Mammary epithelial cell (primary cell): ENCODE measurements at regions of chr15 and their contacts with region 1.

Region 1: GRCh38 chr15:49620658-49621368 is at the starts of genes DTWD1 and FAM227B:
- DNase-seq: peak; percentile 97
- H3K4me3 ChIP-seq: peak within 1 kb of the TSS; percentile 88 to 96 (median 92)
- H3K27ac ChIP-seq: peak within 1 kb of the TSS; percentile 87
- H3K4me1 ChIP-seq: peaks cover 27% of the 10 kb centered on the region
- H3K27me3 ChIP-seq: no peaks in the 10 kb centered on the region
- CTCF ChIP-seq: no peak
- total RNA-seq, gene DTWD1: 23.2 to 24.2 TPM
- total RNA-seq, gene FAM227B: 5.0 to 5.4 TPM

Region 2: GRCh38 chr15:49155110-49155833 is 465.5 kb before region 1 on chr15 and contains the start of gene COPS2:
- CTCF ChIA-PET with region 1: no interaction called
- dilution Hi-C with region 1: no loop called
- in situ Hi-C with region 1: no loop called
- intact Hi-C with region 1: loop called (anchors 10 kb)
- DNase-seq: peak; percentile 98
- H3K4me3 ChIP-seq: peak within 1 kb of the TSS; percentile 83 to 98 (median 97)
- H3K27ac ChIP-seq: peak within 1 kb of the TSS; percentile 86
- H3K4me1 ChIP-seq: peaks cover 13% of the 10 kb centered on the region
- H3K27me3 ChIP-seq: no peaks in the 10 kb centered on the region
- CTCF ChIP-seq: no peak
- total RNA-seq, gene COPS2: 44.7 to 88.3 TPM

Region 3: GRCh38 chr15:49492824-49493223 is 128.0 kb before region 1 on chr15:
- CTCF ChIA-PET with region 1: no interaction called
- dilution Hi-C with region 1: no loop called
- in situ Hi-C with region 1: no loop called
- intact Hi-C with region 1: loop called (anchors 2 kb)
- DNase-seq: peak; percentile 90
- H3K4me3 ChIP-seq: no peak overlapping the region
- H3K27ac ChIP-seq: no peak overlapping the region
- H3K4me1 ChIP-seq: no peaks in the 10 kb centered on the region
- H3K27me3 ChIP-seq: no peaks in the 10 kb centered on the region
- CTCF ChIP-seq: no peak

Region 4: DNA sequence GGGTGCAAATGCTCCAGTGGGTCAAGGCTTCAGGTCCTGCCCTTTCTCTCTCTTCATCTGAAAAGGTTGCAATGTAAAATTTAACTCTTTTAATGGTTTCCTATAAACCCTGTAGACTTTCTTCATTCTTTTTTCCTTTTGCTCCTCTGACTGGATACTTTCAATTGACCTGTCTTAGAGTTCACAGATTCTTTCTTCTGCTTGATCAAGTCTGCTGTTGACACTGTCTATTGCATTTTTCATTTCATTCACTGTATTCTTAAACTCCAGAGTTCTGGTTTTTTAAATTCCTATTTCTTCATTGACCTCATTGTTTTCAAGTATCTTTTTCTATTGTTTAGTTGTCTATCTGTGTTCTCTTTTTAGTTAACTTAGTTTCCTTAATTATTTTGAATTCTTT is 82.3 kb before region 1 on chr15:
- CTCF ChIA-PET with region 1: no interaction called
- dilution Hi-C with region 1: no loop called
- in situ Hi-C with region 1: no loop called
- intact Hi-C with region 1: no loop called
- DNase-seq: no peak
- H3K4me3 ChIP-seq: no peak overlapping the region
- H3K27ac ChIP-seq: no peak overlapping the region
- H3K4me1 ChIP-seq: no peaks in the 10 kb centered on the region
- H3K27me3 ChIP-seq: no peaks in the 10 kb centered on the region
- CTCF ChIP-seq: no peak

Region 5: GRCh38 chr15:49645903-49646302 is 25.1 kb after region 1 on chr15:
- CTCF ChIA-PET with region 1: no interaction called
- dilution Hi-C with region 1: no loop called
- in situ Hi-C with region 1: no loop called
- intact Hi-C with region 1: loop called (anchors 1 kb)
- DNase-seq: peak; percentile 81
- H3K4me3 ChIP-seq: no peak overlapping the region
- H3K27ac ChIP-seq: no peak overlapping the region
- H3K4me1 ChIP-seq: peaks cover 15% of the 10 kb centered on the region
- H3K27me3 ChIP-seq: no peaks in the 10 kb centered on the region
- CTCF ChIP-seq: no peak

Region 6: DNA sequence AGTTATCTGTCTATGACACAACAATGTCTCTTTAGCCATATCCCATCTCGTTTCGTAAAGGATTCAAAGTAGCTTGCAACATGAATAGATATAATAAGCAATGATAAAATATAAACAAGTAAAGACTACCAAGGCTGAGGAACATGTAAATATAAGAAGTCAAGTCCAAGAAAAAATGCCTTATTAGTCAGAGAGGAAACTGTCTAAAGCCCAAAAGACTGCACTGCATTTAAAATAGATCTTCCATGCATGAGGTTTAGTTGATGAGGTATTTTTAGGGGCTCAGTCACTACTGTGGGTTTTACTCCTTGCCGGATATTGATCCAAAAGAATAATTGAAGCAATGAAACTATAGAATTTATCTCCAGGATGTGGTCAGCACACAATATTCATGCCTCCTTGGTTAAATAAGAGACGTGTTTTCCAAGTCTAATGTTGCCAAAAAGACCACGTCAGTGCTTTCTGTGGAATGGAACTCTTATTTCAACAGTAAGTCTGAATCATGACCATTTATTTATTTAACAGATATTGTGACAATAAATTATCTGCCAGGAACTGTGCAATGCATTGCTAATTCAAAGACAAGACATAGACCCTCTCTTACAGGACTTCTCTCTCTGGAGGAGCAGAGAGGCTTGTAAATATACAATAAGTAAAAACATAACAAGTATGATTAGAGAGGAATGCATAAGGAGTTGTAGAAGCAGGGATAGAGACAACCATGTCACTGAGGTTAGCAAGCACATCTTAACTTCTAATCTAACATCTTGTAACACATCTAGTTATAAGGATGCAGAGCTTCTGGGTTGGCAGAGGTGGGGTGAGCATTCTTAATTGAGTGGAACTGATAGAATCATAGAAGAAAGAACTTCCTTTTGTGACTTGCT is 227.4 kb after region 1 on chr15:
- CTCF ChIA-PET with region 1: no interaction called
- dilution Hi-C with region 1: no loop called
- in situ Hi-C with region 1: no loop called
- intact Hi-C with region 1: no loop called
- DNase-seq: peak; percentile 80
- H3K4me3 ChIP-seq: no peak overlapping the region
- H3K27ac ChIP-seq: no peak overlapping the region
- H3K4me1 ChIP-seq: no peaks in the 10 kb centered on the region
- H3K27me3 ChIP-seq: no peaks in the 10 kb centered on the region
- CTCF ChIP-seq: no peak

Region 7: GRCh38 chr15:49863431-49864205 is 242.8 kb after region 1 on chr15:
- CTCF ChIA-PET with region 1: no interaction called
- dilution Hi-C with region 1: no loop called
- in situ Hi-C with region 1: no loop called
- intact Hi-C with region 1: loop called (anchors 10 kb)
- DNase-seq: peak; percentile 84
- H3K4me3 ChIP-seq: no peak overlapping the region
- H3K27ac ChIP-seq: peak overlapping the region; percentile 48
- H3K4me1 ChIP-seq: peaks cover 18% of the 10 kb centered on the region
- H3K27me3 ChIP-seq: no peaks in the 10 kb centered on the region
- CTCF ChIP-seq: no peak